GM18951 (cell line): ENCODE measurements at regions of chr3 and their contacts with region 1.

Region 1: DNA sequence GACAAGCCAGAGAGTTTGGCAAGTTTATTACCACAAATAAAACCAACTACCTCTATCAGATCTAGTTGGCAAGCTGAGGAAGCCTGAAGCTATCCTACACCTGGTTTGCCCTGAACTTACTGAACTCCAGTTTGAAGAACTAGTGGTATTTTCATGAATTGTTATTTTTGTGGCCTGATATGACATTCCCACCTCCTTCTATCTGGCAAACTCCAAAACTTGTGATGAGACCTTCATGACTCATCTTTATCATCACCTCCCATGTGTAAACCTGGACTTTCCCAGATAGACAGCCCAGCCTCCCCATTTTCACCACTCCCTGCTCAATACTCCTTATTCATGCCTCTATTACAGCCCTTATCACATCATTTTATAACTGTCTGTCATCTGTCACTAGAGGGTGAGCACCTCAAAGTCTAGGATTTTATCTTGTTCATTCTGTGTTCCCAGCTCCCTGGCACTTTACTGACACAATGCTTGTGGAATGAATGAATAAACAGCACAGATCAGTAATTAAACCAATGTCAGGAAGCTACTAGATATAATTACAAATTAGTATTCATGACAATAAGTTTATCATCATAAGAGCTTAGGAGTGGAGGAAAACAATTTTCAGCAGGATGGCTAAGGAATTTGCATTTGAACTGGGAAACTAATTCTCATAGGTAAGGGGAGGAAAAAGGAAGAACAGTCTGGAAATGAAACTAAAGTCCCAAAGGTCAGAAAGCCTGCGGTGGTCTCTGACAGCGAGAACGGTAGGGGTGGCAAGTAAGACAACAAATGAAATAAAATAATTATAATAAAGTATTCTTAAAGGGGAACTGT is 13.2 kb upstream of the TRANK1 start:
- POLR2A ChIP-seq: no peak

Region 2: DNA sequence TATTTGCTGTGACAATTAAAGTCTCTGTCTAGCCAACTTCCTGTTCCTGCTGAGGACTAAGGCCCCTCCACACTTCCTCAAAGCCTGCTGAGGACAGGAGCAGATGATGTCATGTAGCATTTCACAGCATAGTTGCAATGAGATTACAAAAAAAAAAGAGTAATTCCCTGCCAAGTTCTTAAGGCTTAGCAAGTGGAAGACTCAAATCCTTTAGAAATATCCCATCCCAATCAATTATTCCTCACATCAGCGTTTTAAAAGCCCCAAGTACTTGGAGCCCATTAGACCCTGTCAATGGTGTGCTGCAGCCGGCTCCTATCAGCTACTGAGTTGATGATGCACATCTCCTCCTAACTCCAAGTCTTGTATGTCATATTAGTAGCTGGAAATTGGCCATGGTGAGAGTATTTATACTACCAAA is 64.9 kb before region 1 on chr3:
- in situ Hi-C with region 1: loop called (anchors 5 kb)
- POLR2A ChIP-seq: no peak